ENCODE measurements at regions of chr2 and their contacts with region 1.

Region 1: GRCh38 chr2:216222650-216223352 is 113.7 kb downstream of the XRCC5 start:
- DNase-seq: peak; percentile 51
- H3K4me3 Mint-ChIP-seq: no peak overlapping the region
- H3K27ac Mint-ChIP-seq: peak overlapping the region; percentile 49
- H3K4me1 Mint-ChIP-seq: peaks cover 33% of the 10 kb centered on the region
- H3K27me3 Mint-ChIP-seq: no peaks in the 10 kb centered on the region

Region 2: GRCh38 chr2:216195565-216196029 is 27.2 kb before region 1 on chr2:
- CTCF ChIA-PET with region 1: no interaction called
- POLR2A ChIA-PET with region 1: interaction called, 8 read pairs
- intact Hi-C with region 1: loop called (anchors 2 kb)
- DNase-seq: peak; percentile 55
- H3K4me3 Mint-ChIP-seq: peak overlapping the region; percentile 31
- H3K27ac Mint-ChIP-seq: peak overlapping the region; percentile 91
- H3K4me1 Mint-ChIP-seq: peaks cover 66% of the 10 kb centered on the region
- H3K27me3 Mint-ChIP-seq: no peaks in the 10 kb centered on the region

Region 3: GRCh38 chr2:216206041-216206703 is 16.6 kb before region 1 on chr2:
- CTCF ChIA-PET with region 1: interaction called, 4 read pairs
- POLR2A ChIA-PET with region 1: no interaction called
- intact Hi-C with region 1: loop called (anchors 2 kb)
- DNase-seq: no peak
- H3K4me3 Mint-ChIP-seq: peak overlapping the region; percentile 9
- H3K27ac Mint-ChIP-seq: peak overlapping the region; percentile 92
- H3K4me1 Mint-ChIP-seq: peaks cover 63% of the 10 kb centered on the region
- H3K27me3 Mint-ChIP-seq: no peaks in the 10 kb centered on the region

Region 4: GRCh38 chr2:216283038-216283900 is 60.5 kb after region 1 on chr2:
- CTCF ChIA-PET with region 1: no interaction called
- POLR2A ChIA-PET with region 1: no interaction called
- intact Hi-C with region 1: loop called (anchors 5 kb)
- DNase-seq: peak; percentile 50
- H3K4me3 Mint-ChIP-seq: no peak overlapping the region
- H3K27ac Mint-ChIP-seq: no peak overlapping the region
- H3K4me1 Mint-ChIP-seq: no peaks in the 10 kb centered on the region
- H3K27me3 Mint-ChIP-seq: peaks cover 2% of the 10 kb centered on the region

Region 5: DNA sequence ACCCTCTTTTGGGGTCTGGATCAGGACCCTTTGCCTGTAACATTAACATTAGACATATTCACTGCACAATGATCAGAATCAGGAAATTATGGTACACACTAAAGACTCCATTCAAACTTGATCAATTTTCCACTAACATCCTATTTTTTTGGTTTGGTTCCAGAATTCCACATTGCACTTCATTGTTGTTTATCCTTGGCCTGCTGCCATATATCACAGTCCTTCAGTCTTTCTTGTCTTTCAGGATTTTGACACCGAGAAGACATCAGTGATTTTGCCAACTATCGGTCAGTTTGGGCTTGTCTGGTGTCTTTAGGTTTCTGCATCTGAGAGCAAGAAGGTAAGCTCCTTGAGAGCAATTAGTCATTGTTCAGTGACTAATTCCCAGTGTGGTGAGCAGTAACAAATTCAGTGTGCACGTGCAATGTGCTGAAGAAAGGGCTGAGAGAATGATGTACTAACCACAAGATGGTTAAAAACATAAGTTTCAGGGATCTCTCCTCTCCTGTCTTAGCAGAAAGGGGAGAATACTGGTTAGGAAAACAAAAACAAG is 126.0 kb after region 1 on chr2:
- CTCF ChIA-PET with region 1: no interaction called
- POLR2A ChIA-PET with region 1: interaction called, 3 read pairs
- intact Hi-C with region 1: loop called (anchors 5 kb)
- DNase-seq: peak; percentile 52
- H3K4me3 Mint-ChIP-seq: no peak overlapping the region
- H3K27ac Mint-ChIP-seq: peak overlapping the region; percentile 36
- H3K4me1 Mint-ChIP-seq: peaks cover 66% of the 10 kb centered on the region
- H3K27me3 Mint-ChIP-seq: no peaks in the 10 kb centered on the region

Region 6: DNA sequence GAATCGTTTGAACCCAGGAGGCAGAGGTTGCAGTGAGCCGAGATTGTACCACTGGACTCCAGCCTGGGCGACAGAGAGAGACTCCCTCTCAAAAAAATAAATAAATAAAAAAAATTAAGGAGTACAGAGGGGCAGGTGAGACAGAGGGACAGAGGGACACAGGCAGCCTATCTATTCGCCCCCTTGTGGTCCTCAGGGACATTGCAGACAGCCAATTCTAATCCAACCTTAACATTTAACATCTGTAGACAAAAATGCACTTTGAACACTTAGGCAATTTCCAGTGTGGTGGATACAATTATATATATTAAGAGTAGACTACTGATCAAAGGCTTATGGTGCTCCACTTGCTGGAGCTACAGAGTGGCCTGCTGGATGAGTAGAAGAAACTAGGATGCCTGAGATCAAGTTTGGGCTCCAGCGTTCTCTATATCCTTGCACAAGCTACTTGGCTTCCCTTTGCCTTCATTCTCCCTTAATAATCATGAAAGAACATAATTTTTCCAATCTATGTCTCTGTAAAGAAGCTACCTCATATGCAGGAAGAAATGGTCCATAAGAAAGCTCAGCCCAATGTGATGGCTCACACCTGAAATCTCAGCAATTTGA is 181.3 kb after region 1 on chr2:
- CTCF ChIA-PET with region 1: interaction called, 33 read pairs
- POLR2A ChIA-PET with region 1: no interaction called
- intact Hi-C with region 1: loop called (anchors 2 kb)
- DNase-seq: peak; percentile 62
- H3K4me3 Mint-ChIP-seq: no peak overlapping the region
- H3K27ac Mint-ChIP-seq: no peak overlapping the region
- H3K4me1 Mint-ChIP-seq: no peaks in the 10 kb centered on the region
- H3K27me3 Mint-ChIP-seq: peaks cover 2% of the 10 kb centered on the region

Region 7: DNA sequence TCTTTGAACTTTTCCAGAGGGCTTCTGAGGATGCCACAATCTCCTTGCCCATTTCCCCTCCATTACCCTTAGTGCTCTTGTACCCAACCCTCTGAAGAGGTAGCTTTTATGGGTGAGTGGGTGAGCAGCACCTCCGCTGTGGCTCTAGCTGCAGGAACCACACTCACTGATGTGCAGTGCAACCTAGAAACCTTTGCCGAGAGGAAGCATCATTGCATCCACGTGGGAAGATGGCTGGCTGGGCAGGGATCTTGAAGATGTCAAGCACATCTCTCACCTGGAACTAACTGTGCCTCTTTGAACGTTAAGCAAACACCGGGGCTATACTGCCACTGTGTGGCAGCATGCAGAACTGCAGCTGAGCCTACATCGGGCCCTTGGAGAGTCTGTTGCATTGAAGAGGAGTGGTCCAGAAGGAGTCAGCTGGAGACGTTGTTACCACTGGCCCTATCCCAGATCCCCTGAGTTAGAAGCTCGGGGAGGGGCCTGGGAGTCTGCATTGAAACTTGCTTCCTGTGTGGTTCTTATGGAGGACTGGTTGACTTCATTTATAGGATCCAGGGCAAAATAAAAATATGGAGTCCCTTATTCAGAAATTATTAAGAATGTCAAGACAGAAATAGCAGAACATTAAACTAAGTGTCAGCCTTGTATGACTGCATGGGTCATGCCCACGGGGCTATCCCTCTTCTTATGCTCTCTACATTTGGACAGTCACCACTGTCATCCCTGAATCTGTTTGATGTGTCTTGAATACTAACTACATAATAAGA is 443.8 kb after region 1 on chr2:
- CTCF ChIA-PET with region 1: interaction called, 11 read pairs
- POLR2A ChIA-PET with region 1: no interaction called
- intact Hi-C with region 1: loop called (anchors 5 kb)
- DNase-seq: peak; percentile 79
- H3K4me3 Mint-ChIP-seq: no peak overlapping the region
- H3K27ac Mint-ChIP-seq: no peak overlapping the region
- H3K4me1 Mint-ChIP-seq: no peaks in the 10 kb centered on the region
- H3K27me3 Mint-ChIP-seq: peaks cover 3% of the 10 kb centered on the region

Region 8: GRCh38 chr2:216799873-216800431 is 577.2 kb after region 1 on chr2:
- CTCF ChIA-PET with region 1: no interaction called
- POLR2A ChIA-PET with region 1: no interaction called
- intact Hi-C with region 1: no loop called
- DNase-seq: no peak
- H3K4me3 Mint-ChIP-seq: no peak overlapping the region
- H3K27ac Mint-ChIP-seq: no peak overlapping the region
- H3K4me1 Mint-ChIP-seq: no peaks in the 10 kb centered on the region
- H3K27me3 Mint-ChIP-seq: no peaks in the 10 kb centered on the region